CD8-positive, alpha-beta T cell (primary cell): ENCODE measurements at regions of chr4 and their contacts with region 1.

Region 1: DNA sequence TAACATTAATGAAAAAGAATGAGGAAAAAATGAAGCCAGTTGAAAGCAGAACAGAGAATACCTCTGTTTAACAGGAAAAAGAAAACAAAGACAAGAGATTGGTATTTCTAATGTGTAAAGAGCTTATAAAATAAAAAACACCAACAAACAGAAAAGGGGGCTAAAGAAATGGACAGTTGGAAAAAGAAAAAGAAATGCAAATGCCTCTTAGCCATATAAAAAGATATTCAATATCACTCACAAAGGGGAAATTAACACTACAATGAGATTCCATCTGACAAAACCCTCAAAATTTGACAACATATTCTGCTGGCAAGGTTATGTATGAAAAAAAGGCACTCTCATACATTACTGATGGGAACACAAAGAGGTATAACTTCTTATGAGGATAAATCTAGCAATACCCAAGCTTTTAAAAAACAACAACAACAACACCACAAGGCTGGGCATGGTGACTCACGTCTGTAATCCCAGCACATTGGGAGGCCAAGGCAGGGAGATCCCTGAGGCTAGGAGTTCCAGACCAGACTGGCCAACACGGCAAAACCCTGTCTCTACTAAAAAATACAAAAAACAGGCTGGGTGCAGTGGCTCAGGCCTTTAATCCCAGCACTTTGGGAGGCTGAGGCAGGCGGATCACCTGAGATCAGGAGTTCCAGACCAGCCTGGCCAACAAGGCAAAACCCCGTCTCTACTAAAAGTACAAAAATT is 75.8 kb downstream of the FRYL start:
- DNase-seq: no peak
- ATAC-seq: no peak
- H3K4me3 ChIP-seq: no peak overlapping the region
- H3K4me3 Mint-ChIP-seq: no peak overlapping the region
- H3K27ac ChIP-seq: no peak overlapping the region
- H3K27ac Mint-ChIP-seq: peak overlapping the region; percentile 29
- H3K4me1 ChIP-seq: peaks cover 9% of the 10 kb centered on the region
- H3K4me1 Mint-ChIP-seq: peaks cover 41% of the 10 kb centered on the region
- H3K27me3 ChIP-seq: no peaks in the 10 kb centered on the region
- H3K27me3 Mint-ChIP-seq: no peaks in the 10 kb centered on the region
- CTCF ChIP-seq: no peak

Region 2: DNA sequence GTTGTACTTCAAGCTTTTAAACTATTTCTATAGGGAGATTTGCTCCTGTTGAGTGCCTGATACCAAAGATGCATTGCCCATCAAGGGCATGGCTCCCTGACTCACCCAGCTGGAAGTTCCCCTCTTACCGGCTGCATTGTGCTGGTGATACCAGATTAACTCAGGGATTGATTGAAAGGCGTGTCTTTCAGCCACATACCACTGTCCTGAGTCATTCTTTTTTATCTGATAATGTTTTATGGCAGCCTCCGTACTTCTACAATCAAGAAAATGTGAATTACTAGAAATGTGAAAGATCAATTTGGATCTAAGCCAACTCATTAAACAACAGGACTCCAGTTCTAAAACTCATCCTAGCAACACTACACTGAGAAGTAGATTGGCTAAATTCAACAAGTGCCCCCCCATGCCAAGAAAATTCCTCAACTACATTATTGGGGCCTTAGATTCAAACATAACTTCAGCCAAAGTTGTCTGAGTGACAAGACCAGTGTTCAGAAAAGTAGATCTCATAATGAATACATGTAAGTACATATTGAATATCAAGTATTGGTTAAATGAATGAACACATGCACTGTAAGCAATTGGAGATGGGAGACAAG is 610.2 kb before region 1 on chr4:
- CTCF ChIA-PET with region 1: no interaction called
- POLR2A ChIA-PET with region 1: no interaction called
- intact Hi-C with region 1: no loop called
- DNase-seq: no peak
- ATAC-seq: no peak
- H3K4me3 ChIP-seq: no peak overlapping the region
- H3K4me3 Mint-ChIP-seq: no peak overlapping the region
- H3K27ac ChIP-seq: no peak overlapping the region
- H3K27ac Mint-ChIP-seq: peak overlapping the region; percentile 67
- H3K4me1 ChIP-seq: no peaks in the 10 kb centered on the region
- H3K4me1 Mint-ChIP-seq: peaks cover 8% of the 10 kb centered on the region
- H3K27me3 ChIP-seq: no peaks in the 10 kb centered on the region
- H3K27me3 Mint-ChIP-seq: no peaks in the 10 kb centered on the region
- CTCF ChIP-seq: no peak

Region 3: DNA sequence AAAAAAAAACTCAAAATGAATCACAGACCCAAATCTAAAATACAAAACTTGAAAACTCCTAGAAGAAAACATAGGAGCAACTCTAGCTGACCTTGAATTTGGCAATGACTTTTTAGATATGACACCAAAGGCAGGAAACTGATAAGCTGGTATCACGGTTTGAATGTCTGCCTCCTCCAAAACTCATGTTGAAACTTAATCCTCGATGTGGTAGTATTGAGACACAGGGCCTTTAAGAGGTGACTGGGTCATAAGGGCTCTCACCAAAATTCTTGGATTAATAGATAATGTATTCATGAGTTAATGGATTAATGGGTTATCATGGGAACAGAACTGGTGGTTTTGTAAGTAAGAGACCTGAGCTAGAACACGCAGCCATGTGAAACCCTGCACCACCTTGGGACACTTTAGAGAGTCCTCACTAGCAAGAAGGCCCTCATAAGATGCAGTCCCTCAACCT is 35.3 kb after region 1 on chr4:
- CTCF ChIA-PET with region 1: no interaction called
- POLR2A ChIA-PET with region 1: no interaction called
- intact Hi-C with region 1: loop called in 1 of 2 experiments (anchors 5 kb)
- DNase-seq: no peak
- ATAC-seq: no peak
- H3K4me3 ChIP-seq: no peak overlapping the region
- H3K4me3 Mint-ChIP-seq: peak overlapping the region; percentile 39
- H3K27ac ChIP-seq: no peak overlapping the region
- H3K27ac Mint-ChIP-seq: peak overlapping the region; percentile 6
- H3K4me1 ChIP-seq: peaks cover 46% of the 10 kb centered on the region
- H3K4me1 Mint-ChIP-seq: peaks cover 73% of the 10 kb centered on the region
- H3K27me3 ChIP-seq: no peaks in the 10 kb centered on the region
- H3K27me3 Mint-ChIP-seq: no peaks in the 10 kb centered on the region
- CTCF ChIP-seq: no peak

Region 4: DNA sequence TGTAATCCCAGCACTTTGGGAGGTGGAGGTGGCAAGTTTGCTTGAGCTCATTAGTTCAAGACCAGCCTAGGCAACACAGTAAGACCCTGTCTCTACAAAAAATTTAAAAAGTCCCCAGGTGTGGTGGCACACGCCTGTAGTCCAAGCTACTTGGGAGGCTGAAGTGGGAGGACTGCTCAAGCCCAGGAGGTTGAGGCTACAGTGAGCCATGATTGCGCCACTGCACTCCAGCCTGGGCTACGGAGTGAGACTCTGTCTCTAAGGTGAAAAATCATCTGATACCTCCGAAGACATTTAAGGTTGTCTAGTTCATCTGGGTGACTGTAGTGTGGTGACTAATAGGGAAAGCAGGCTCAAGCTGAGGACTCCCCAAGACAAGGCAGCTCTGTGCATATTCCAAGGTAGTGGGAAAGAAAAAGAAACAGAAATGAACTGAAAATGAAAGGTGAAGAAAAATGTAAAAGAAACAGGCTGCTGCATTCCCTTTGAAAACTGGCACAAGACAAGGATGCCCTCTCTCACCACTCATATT is 52.5 kb after region 1 on chr4:
- CTCF ChIA-PET with region 1: no interaction called
- POLR2A ChIA-PET with region 1: no interaction called
- intact Hi-C with region 1: no loop called
- DNase-seq: no peak
- ATAC-seq: no peak
- H3K4me3 ChIP-seq: no peak overlapping the region
- H3K4me3 Mint-ChIP-seq: no peak overlapping the region
- H3K27ac ChIP-seq: no peak overlapping the region
- H3K27ac Mint-ChIP-seq: no peak overlapping the region
- H3K4me1 ChIP-seq: peaks cover 11% of the 10 kb centered on the region
- H3K4me1 Mint-ChIP-seq: peaks cover 52% of the 10 kb centered on the region
- H3K27me3 ChIP-seq: no peaks in the 10 kb centered on the region
- H3K27me3 Mint-ChIP-seq: no peaks in the 10 kb centered on the region
- CTCF ChIP-seq: no peak

Region 5: DNA sequence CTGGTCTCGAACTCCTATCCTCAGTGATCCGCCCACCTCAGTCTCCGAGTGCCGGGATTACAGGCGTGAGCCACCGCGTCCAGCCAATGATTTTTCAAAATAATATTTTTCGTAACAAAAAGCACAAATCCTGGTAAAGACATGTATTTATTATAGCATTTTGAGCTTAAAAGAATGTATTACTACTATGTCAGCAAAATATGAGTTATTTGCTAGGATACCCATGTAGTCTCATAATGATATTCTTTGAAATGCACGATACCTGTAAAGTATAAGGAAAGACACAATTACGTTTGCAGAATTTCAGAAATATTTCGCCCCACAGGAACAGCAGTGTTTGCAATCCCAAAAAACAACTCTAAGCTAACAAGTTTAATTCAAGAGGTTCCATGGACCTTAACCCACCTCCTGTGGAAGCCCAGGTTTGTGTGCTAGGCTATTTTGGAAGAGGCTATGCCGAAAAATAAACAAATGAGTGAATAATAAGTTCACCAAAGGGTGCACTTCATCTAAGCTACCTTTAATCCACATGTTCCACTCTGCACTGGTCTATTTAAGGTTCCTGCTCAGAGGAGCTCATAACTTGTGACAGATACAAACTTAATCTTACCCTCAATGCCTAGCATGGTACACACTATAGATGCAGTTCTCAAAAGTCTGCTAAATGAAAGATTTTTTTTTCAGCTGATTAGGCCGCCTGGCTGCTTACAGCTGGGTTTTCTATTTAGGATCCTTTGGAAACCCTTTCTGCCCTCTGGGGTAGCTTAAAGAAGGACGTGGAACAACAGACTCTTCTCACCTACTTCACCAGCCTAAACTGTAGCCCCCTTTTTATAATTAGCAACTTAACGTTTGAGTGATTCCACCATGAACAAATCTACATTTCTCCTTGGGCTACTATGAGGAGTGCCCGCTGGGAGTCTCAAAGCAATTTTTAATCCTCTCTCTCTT is 70.8 kb after region 1 on chr4:
- CTCF ChIA-PET with region 1: no interaction called
- POLR2A ChIA-PET with region 1: interaction called, 4 read pairs
- intact Hi-C with region 1: loop called in 1 of 2 experiments (anchors 5 kb)
- DNase-seq: no peak
- ATAC-seq: no peak
- H3K4me3 ChIP-seq: no peak overlapping the region
- H3K4me3 Mint-ChIP-seq: peak overlapping the region; percentile 4
- H3K27ac ChIP-seq: no peak overlapping the region
- H3K27ac Mint-ChIP-seq: no peak overlapping the region
- H3K4me1 ChIP-seq: peaks cover 56% of the 10 kb centered on the region
- H3K4me1 Mint-ChIP-seq: peaks cover 78% of the 10 kb centered on the region
- H3K27me3 ChIP-seq: no peaks in the 10 kb centered on the region
- H3K27me3 Mint-ChIP-seq: no peaks in the 10 kb centered on the region
- CTCF ChIP-seq: no peak